Natural killer cell (primary cell): ENCODE measurements at regions of chr18 and their contacts with region 1.

Region 1: GRCh38 chr18:12038639-12039417 is 54.8 kb upstream of the ANKRD62 start:
- DNase-seq: peak; percentile 75 to 83
- ATAC-seq: peak; percentile 94 to 99 (median 98)
- H3K4me3 ChIP-seq: peak overlapping the region; percentile 31
- H3K4me3 Mint-ChIP-seq: peak overlapping the region; percentile 81
- H3K27ac ChIP-seq: no peak overlapping the region
- H3K27ac Mint-ChIP-seq: no peak overlapping the region
- H3K4me1 ChIP-seq: peaks cover 8% of the 10 kb centered on the region
- H3K4me1 Mint-ChIP-seq: peaks cover 0 to 7% of the 10 kb centered on the region in 2 donors
- H3K27me3 ChIP-seq: peaks cover 4% of the 10 kb centered on the region
- H3K27me3 Mint-ChIP-seq: peaks cover 10 to 24% of the 10 kb centered on the region in 2 donors
- CTCF ChIP-seq: peak; percentile 98

Region 2: DNA sequence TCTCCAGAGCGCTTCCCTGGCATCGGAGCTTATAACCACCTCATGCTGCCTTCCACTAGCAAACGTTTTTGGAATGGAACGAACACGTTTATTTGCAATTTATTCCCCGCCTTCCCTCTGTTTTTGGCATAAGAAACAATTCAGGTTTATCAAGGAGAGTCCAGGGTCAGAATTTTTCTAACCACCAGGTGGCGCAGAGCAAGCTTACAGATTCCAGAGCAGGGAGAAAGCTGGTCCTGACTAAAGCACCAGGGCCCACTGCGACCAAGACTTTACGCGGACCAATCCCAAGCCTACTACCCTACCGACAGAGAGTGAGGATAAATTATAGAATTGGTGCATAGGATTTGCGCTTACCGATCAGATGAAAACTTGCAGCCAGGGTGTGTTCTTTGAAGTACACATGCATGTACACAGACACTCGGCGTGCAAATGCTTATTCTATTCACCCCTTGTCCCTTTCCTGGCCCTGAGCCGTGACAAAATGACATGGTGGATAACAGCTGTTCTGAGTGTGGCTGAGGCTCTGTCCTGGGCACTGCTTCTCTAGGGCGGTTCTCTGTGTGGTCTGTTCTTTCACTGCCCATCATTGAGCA is 1478.3 kb before region 1 on chr18:
- intact Hi-C with region 1: loop called (anchors 5 kb)
- DNase-seq: peak; percentile 23 to 69
- ATAC-seq: peak in 2 of 3 donors; percentile 65 to 75
- H3K4me3 ChIP-seq: no peak overlapping the region
- H3K4me3 Mint-ChIP-seq: no peak overlapping the region
- H3K27ac ChIP-seq: no peak overlapping the region
- H3K27ac Mint-ChIP-seq: peak overlapping the region in 1 of 2 donors; percentile 44
- H3K4me1 ChIP-seq: peaks cover 7% of the 10 kb centered on the region
- H3K4me1 Mint-ChIP-seq: peaks cover 13 to 14% of the 10 kb centered on the region in 2 donors
- H3K27me3 ChIP-seq: no peaks in the 10 kb centered on the region
- H3K27me3 Mint-ChIP-seq: no peaks in the 10 kb centered on the region
- CTCF ChIP-seq: peak; percentile 67

Region 3: GRCh38 chr18:11654736-11655605 is 383.9 kb before region 1 on chr18:
- intact Hi-C with region 1: loop called (anchors 5 kb)
- DNase-seq: peak; percentile 22 to 51
- ATAC-seq: peak in 1 of 3 donors; percentile 58
- H3K4me3 ChIP-seq: no peak overlapping the region
- H3K4me3 Mint-ChIP-seq: no peak overlapping the region
- H3K27ac ChIP-seq: no peak overlapping the region
- H3K27ac Mint-ChIP-seq: no peak overlapping the region
- H3K4me1 ChIP-seq: no peaks in the 10 kb centered on the region
- H3K4me1 Mint-ChIP-seq: peaks cover 6% of the 10 kb centered on the region in 2 donors
- H3K27me3 ChIP-seq: no peaks in the 10 kb centered on the region
- H3K27me3 Mint-ChIP-seq: peaks cover 38 to 77% of the 10 kb centered on the region in 2 donors
- CTCF ChIP-seq: peak; percentile 59

Region 4: GRCh38 chr18:11733031-11733430 is 305.8 kb before region 1 on chr18:
- intact Hi-C with region 1: loop called (anchors 1 kb)
- DNase-seq: peak; percentile 58 to 75
- ATAC-seq: peak; percentile 82 to 92 (median 83)
- H3K4me3 ChIP-seq: no peak overlapping the region
- H3K4me3 Mint-ChIP-seq: peak overlapping the region; percentile 53
- H3K27ac ChIP-seq: no peak overlapping the region
- H3K27ac Mint-ChIP-seq: no peak overlapping the region
- H3K4me1 ChIP-seq: peaks cover 4% of the 10 kb centered on the region
- H3K4me1 Mint-ChIP-seq: peaks cover 0 to 5% of the 10 kb centered on the region in 2 donors
- H3K27me3 ChIP-seq: peaks cover 3% of the 10 kb centered on the region
- H3K27me3 Mint-ChIP-seq: peaks cover 14 to 26% of the 10 kb centered on the region in 2 donors
- CTCF ChIP-seq: peak; percentile 85

Region 5: GRCh38 chr18:11937874-11938478 is 100.9 kb before region 1 on chr18:
- intact Hi-C with region 1: loop called (anchors 1 kb)
- DNase-seq: peak; percentile 62 to 87
- ATAC-seq: peak; percentile 72 to 80 (median 72)
- H3K4me3 ChIP-seq: no peak overlapping the region
- H3K4me3 Mint-ChIP-seq: no peak overlapping the region
- H3K27ac ChIP-seq: no peak overlapping the region
- H3K27ac Mint-ChIP-seq: no peak overlapping the region
- H3K4me1 ChIP-seq: no peaks in the 10 kb centered on the region
- H3K4me1 Mint-ChIP-seq: peaks cover 4 to 6% of the 10 kb centered on the region in 2 donors
- H3K27me3 ChIP-seq: no peaks in the 10 kb centered on the region
- H3K27me3 Mint-ChIP-seq: peaks cover 0 to 4% of the 10 kb centered on the region in 2 donors
- CTCF ChIP-seq: peak; percentile 78